ENCODE measurements at regions of chr21 and their contacts with region 1.

Region 1: DNA sequence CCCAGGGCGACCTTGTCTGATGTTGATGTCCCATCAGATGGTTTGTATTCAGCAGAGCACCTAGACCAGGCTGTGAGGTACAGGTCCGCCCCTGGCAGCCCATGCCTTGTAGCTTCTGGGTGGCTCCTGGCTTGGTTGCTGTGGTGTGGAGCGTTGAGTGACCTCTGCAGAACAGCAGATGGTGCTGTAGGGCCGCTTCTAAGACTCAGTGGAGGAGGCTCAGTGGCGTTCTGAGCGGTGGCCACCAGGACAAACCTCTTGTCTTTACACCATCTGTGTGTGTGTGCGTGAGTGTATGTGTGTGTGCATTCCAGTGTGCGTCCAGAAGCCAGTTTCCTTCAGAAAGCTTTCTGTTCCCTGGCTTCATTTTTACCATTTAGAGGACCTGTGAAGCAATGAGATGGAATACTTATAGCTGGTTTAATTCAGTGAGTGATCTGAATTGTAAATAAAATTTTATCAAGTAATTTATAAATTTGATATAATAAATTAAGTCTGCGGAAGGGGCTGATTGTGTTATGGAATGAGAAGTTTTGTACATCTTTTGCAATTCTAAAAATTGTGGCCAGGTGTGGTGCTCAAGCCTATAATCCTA is 66.1 kb downstream of the ADARB1 start:
- DNase-seq: peak; percentile 90
- H3K4me3 ChIP-seq: no peak overlapping the region; a peak in 1 of 4 replicates
- H3K27ac ChIP-seq: no peak overlapping the region
- H3K4me1 ChIP-seq: peaks cover 6 to 9% of the 10 kb centered on the region in 2 experiments; a peak in 3 of 4 replicates
- H3K27me3 ChIP-seq: no peaks in the 10 kb centered on the region
- CTCF ChIP-seq: peak; percentile 91
- EP300 ChIP-seq: no peak
- RAD21 ChIP-seq: peak; percentile 99

Region 2: DNA sequence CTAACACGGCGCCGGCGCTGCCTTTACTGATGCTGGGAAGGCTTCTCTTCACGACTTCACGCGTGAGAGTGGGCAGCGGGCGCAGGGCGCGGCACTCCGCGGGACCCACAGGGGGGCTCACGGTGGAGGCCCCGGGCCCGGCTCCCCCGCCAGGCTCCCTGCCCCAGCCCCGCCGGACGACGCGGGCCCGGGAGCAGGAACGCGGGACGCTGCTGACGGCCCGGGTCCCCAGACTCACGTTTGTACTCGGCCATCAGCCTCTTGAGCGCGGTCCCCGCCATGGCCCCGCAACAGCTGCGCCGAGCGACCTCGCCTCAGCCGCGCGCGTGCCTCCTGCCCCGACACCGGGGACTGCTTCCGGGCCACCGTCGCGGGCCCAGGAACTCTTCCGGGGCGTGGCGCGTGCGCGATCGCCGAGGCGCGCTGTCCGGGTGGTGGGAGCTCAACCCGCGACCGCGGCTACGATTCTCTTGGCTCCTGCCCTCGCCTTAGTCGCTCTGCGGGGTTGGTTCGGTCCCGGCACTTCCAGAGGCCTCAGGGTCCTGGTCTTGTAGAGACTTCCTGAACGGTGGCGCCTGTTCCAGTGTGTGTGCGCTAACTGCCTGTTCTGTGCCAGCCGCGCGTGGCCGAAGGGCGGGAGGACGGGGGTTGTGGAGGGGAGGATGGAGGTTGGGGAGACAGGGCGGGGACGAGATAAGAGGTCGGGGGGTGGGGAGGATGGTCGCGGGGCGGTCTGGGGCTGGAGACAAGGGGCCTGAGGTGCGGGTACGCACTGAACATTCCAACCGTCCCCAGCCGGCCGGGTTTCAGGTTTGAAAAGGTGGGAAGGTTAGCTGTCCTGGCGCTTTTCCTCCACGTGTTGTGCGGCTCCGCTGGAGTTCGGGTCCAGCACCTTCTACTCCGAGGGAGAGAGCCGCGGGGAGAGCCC is 338.7 kb before region 1 on chr21 and contains the start of gene UBE2G2:
- CTCF ChIA-PET with region 1: interaction called, 20 read pairs
- POLR2A ChIA-PET with region 1: no interaction called
- DNase-seq: peak; percentile 98
- H3K4me3 ChIP-seq: peak within 1 kb of the TSS; percentile 60 to 97
- H3K27ac ChIP-seq: peak within 1 kb of the TSS; percentile 36 to 91; a peak in 3 of 4 replicates
- H3K4me1 ChIP-seq: peaks cover 0 to 35% of the 10 kb centered on the region in 2 experiments; a peak in 2 of 4 replicates
- H3K27me3 ChIP-seq: no peaks in the 10 kb centered on the region
- CTCF ChIP-seq: no peak
- EP300 ChIP-seq: no peak
- RAD21 ChIP-seq: no peak
- polyA plus RNA-seq, gene UBE2G2: 129 and 149 TPM in 2 replicates

Region 3: GRCh38 chr21:45067462-45068285 is 72.8 kb before region 1 on chr21:
- CTCF ChIA-PET with region 1: interaction called, 19 read pairs
- POLR2A ChIA-PET with region 1: no interaction called
- DNase-seq: peak; percentile 88
- H3K4me3 ChIP-seq: no peak overlapping the region
- H3K27ac ChIP-seq: peak overlapping the region in 1 of 2 experiments; percentile 73; a peak in 2 of 4 replicates
- H3K4me1 ChIP-seq: peaks cover 0 to 21% of the 10 kb centered on the region in 2 experiments; a peak in 2 of 4 replicates
- H3K27me3 ChIP-seq: no peaks in the 10 kb centered on the region
- CTCF ChIP-seq: no peak
- EP300 ChIP-seq: peak in 1 of 2 experiments; percentile 24; a peak in 1 of 4 replicates
- RAD21 ChIP-seq: no peak

Region 4: GRCh38 chr21:45130324-45130774 is 10.1 kb before region 1 on chr21:
- CTCF ChIA-PET with region 1: interaction called, 177 read pairs
- POLR2A ChIA-PET with region 1: no interaction called
- DNase-seq: no peak
- H3K4me3 ChIP-seq: peak overlapping the region; percentile 30 to 58; a peak in 3 of 4 replicates
- H3K27ac ChIP-seq: peak overlapping the region; percentile 62 to 74; a peak in 3 of 4 replicates
- H3K4me1 ChIP-seq: peaks cover 8 to 22% of the 10 kb centered on the region in 2 experiments
- H3K27me3 ChIP-seq: no peaks in the 10 kb centered on the region
- CTCF ChIP-seq: no peak
- EP300 ChIP-seq: no peak
- RAD21 ChIP-seq: no peak

Region 5: GRCh38 chr21:45236481-45236880 is 96.0 kb after region 1 on chr21:
- CTCF ChIA-PET with region 1: interaction called, 10 read pairs
- POLR2A ChIA-PET with region 1: no interaction called
- DNase-seq: no peak
- H3K4me3 ChIP-seq: no peak overlapping the region
- H3K27ac ChIP-seq: no peak overlapping the region
- H3K4me1 ChIP-seq: peaks cover 0 to 8% of the 10 kb centered on the region in 2 experiments; a peak in 1 of 4 replicates
- H3K27me3 ChIP-seq: no peaks in the 10 kb centered on the region; the same call in 1 of the 2 replicates
- CTCF ChIP-seq: no peak
- EP300 ChIP-seq: no peak
- RAD21 ChIP-seq: peak; percentile 21

Region 6: GRCh38 chr21:45287438-45288391 is 147.3 kb after region 1 on chr21 and contains the start of gene POFUT2:
- CTCF ChIA-PET with region 1: interaction called, 271 read pairs
- POLR2A ChIA-PET with region 1: interaction called, 4 read pairs
- DNase-seq: peak; percentile 99
- H3K4me3 ChIP-seq: peak within 1 kb of the TSS; percentile 78 to 80
- H3K27ac ChIP-seq: peak within 1 kb of the TSS; percentile 60 to 81
- H3K4me1 ChIP-seq: peaks cover 0 to 31% of the 10 kb centered on the region in 2 experiments; a peak in 1 of 4 replicates
- H3K27me3 ChIP-seq: no peaks in the 10 kb centered on the region
- CTCF ChIP-seq: no peak
- EP300 ChIP-seq: no peak
- RAD21 ChIP-seq: no peak
- polyA plus RNA-seq, gene POFUT2: 45.5 and 53.3 TPM in 2 replicates

Region 7: GRCh38 chr21:45460611-45461368 is 320.3 kb after region 1 on chr21:
- CTCF ChIA-PET with region 1: interaction called, 10 read pairs
- POLR2A ChIA-PET with region 1: no interaction called
- DNase-seq: no peak
- H3K4me3 ChIP-seq: no peak overlapping the region
- H3K27ac ChIP-seq: peak overlapping the region in 1 of 2 experiments; percentile 65; a peak in 2 of 4 replicates
- H3K4me1 ChIP-seq: peaks cover 0 to 6% of the 10 kb centered on the region in 2 experiments; a peak in 1 of 4 replicates
- H3K27me3 ChIP-seq: no peaks in the 10 kb centered on the region
- CTCF ChIP-seq: no peak
- EP300 ChIP-seq: no peak
- RAD21 ChIP-seq: no peak